PC-9 (cell line): ENCODE measurements at regions of chr1 and their contacts with region 1.

Region 1: GRCh38 chr1:165173409-165173808 is 183.1 kb downstream of the LMX1A start:
- DNase-seq: no peak
- H3K4me3 ChIP-seq: no peak overlapping the region
- H3K27ac ChIP-seq: no peak overlapping the region
- H3K4me1 ChIP-seq: peaks cover 30% of the 10 kb centered on the region
- H3K27me3 ChIP-seq: no peaks in the 10 kb centered on the region
- CTCF ChIP-seq: no peak

Region 2: DNA sequence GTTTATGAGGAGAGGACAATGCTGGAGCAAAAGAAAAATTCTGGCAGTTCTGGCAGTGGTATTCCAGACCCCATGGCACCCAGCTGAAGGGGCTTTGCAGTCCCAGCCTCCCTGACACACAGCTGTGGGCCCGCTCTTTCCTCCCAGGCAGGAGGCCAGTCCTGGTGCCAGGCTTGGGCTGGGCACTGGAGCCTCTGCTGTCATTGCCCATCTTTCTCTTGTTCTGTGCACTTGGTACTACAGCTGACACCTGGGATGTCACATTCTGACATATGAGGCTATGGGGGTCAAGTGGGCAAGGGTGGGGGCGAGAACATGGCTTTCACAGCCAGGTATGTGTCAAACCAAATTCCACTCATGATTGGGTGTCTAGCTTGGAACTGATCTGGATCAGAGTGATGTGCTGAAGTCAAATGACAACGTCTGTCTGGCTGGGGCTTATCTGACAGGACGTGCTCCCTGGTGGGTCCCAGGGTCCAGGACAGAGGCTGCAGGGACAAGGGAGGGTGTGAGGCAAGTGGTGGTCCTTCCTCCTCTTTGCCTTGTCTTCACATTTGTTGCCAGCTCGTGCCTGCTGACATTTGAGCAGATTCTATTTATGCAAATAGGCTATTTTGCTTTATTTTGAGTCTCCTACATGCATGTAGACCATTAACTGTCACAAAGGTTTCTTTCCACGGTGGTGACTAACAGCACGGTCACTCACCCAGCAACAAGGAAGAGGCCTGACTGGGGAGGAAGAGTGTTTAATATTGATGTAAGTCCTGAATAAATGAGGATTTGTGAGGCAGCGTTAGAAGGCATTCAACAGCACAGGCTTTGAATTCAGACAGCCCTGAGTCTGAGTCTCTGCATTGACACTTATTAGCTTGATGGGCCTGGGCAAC is 278.1 kb before region 1 on chr1:
- CTCF ChIA-PET with region 1: no interaction called
- POLR2A ChIA-PET with region 1: no interaction called
- intact Hi-C with region 1: no loop called
- DNase-seq: peak in 1 of 2 experiments; percentile 61
- H3K4me3 ChIP-seq: no peak overlapping the region
- H3K27ac ChIP-seq: no peak overlapping the region
- H3K4me1 ChIP-seq: peaks cover 11% of the 10 kb centered on the region
- H3K27me3 ChIP-seq: no peaks in the 10 kb centered on the region
- CTCF ChIP-seq: no peak

Region 3: GRCh38 chr1:165116732-165117131 is 56.7 kb before region 1 on chr1:
- CTCF ChIA-PET with region 1: no interaction called
- POLR2A ChIA-PET with region 1: no interaction called
- intact Hi-C with region 1: no loop called
- DNase-seq: peak in 1 of 2 experiments; percentile 80
- H3K4me3 ChIP-seq: no peak overlapping the region
- H3K27ac ChIP-seq: no peak overlapping the region
- H3K4me1 ChIP-seq: no peaks in the 10 kb centered on the region
- H3K27me3 ChIP-seq: peaks cover 4% of the 10 kb centered on the region; the same call in 1 of the 2 replicates
- CTCF ChIP-seq: no peak

Region 4: GRCh38 chr1:165204548-165204947 is 31.1 kb after region 1 on chr1:
- CTCF ChIA-PET with region 1: no interaction called
- POLR2A ChIA-PET with region 1: interaction called, 5 read pairs
- intact Hi-C with region 1: loop called (anchors 5 kb)
- DNase-seq: no peak
- H3K4me3 ChIP-seq: no peak overlapping the region
- H3K27ac ChIP-seq: no peak overlapping the region
- H3K4me1 ChIP-seq: peaks cover 11% of the 10 kb centered on the region
- H3K27me3 ChIP-seq: no peaks in the 10 kb centered on the region
- CTCF ChIP-seq: no peak

Region 5: DNA sequence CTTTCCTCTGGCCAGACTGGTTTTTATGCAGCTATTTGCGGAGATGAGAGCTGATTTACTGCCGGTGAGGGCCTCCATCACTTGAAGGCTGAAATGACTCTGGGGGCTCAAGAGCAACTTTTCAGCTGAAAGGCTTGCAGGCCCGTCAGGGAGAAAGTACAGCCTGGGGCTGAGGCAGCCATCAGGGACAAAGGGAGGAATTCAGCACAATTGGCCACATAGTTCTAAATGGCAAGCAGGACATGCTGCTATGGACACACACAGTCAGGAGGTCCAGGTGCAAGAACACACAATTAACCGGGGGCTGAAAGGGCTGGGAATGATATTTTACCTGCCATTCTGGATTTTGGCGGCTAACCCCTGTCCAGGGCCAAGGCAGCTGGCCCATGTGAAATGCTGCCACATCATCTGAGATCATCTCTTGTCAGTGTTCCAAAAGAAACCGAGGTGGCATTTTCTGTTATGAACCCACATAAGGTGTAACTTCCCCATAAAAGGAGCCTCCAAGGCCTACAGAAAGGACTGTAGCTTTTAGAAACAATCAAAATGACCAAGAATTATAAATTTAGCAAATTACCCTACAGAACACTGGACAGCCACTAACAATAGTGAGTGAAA is 124.9 kb after region 1 on chr1:
- CTCF ChIA-PET with region 1: no interaction called
- POLR2A ChIA-PET with region 1: no interaction called
- intact Hi-C with region 1: no loop called
- DNase-seq: no peak
- H3K4me3 ChIP-seq: no peak overlapping the region
- H3K27ac ChIP-seq: no peak overlapping the region
- H3K4me1 ChIP-seq: no peaks in the 10 kb centered on the region
- H3K27me3 ChIP-seq: no peaks in the 10 kb centered on the region
- CTCF ChIP-seq: no peak

Region 6: DNA sequence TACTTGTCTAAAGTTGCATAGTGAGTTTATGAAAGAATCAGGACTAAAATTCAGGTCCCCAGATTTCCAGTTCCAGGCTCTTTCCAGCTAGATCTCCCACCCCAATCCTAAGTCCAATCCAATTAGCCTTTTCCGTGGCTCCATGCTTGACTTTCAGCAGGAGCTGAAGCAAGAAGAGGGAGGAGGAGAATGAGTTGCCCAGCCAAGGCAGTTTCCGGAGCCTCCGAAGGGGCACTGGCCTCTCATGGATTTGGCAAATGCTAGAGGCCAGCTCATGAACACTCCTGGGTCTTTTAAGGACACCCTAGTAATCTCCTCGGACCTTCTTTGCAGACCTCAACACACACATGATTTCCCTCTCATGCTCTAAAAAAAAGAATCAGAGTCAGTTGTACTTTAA is 359.8 kb after region 1 on chr1:
- CTCF ChIA-PET with region 1: no interaction called
- POLR2A ChIA-PET with region 1: interaction called, 13 read pairs
- intact Hi-C with region 1: no loop called
- DNase-seq: no peak
- H3K4me3 ChIP-seq: no peak overlapping the region
- H3K27ac ChIP-seq: no peak overlapping the region
- H3K4me1 ChIP-seq: no peaks in the 10 kb centered on the region
- H3K27me3 ChIP-seq: no peaks in the 10 kb centered on the region
- CTCF ChIP-seq: no peak